Activated CD4-positive, alpha-beta T cell treated with anti-CD3 and anti-CD28 coated beads for 36 hours (primary cell): ENCODE measurements at regions of chr4 and their contacts with region 1.

Region 1: GRCh38 chr4:131084997-131085396 is 1989.0 kb downstream of the C4orf33 start:
- DNase-seq: no peak
- ATAC-seq: no peak
- H3K4me3 Mint-ChIP-seq: no peak overlapping the region
- H3K27ac Mint-ChIP-seq: no peak overlapping the region
- H3K4me1 Mint-ChIP-seq: no peaks in the 10 kb centered on the region
- H3K27me3 Mint-ChIP-seq: no peaks in the 10 kb centered on the region

Region 2: DNA sequence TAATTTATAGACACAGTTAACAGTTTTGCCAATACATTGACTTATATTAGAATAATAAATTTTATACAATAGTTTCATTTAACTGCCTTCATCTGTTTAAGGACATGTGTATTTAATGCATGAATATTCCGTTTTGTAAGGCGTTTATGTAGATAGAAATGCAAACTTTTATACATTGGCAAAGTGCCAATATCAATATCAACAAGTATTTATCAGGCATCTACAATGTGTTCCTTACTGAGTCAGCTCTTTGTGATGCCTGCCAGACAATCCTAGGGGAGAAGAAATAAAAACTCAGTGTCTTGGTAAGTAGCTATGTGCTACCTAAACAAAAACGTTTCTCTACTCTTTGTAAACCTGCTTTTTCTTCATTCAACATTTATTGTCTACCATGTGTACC is 846.9 kb before region 1 on chr4:
- CTCF ChIA-PET with region 1: no interaction called
- POLR2A ChIA-PET with region 1: no interaction called
- intact Hi-C with region 1: no loop called
- DNase-seq: no peak
- ATAC-seq: no peak
- H3K4me3 Mint-ChIP-seq: no peak overlapping the region
- H3K27ac Mint-ChIP-seq: no peak overlapping the region
- H3K4me1 Mint-ChIP-seq: peaks cover 5% of the 10 kb centered on the region
- H3K27me3 Mint-ChIP-seq: no peaks in the 10 kb centered on the region

Region 3: GRCh38 chr4:131063878-131064277 is 21.1 kb before region 1 on chr4:
- CTCF ChIA-PET with region 1: no interaction called
- POLR2A ChIA-PET with region 1: no interaction called
- intact Hi-C with region 1: no loop called
- DNase-seq: no peak
- ATAC-seq: no peak
- H3K4me3 Mint-ChIP-seq: no peak overlapping the region
- H3K27ac Mint-ChIP-seq: no peak overlapping the region
- H3K4me1 Mint-ChIP-seq: no peaks in the 10 kb centered on the region
- H3K27me3 Mint-ChIP-seq: no peaks in the 10 kb centered on the region

Region 4: DNA sequence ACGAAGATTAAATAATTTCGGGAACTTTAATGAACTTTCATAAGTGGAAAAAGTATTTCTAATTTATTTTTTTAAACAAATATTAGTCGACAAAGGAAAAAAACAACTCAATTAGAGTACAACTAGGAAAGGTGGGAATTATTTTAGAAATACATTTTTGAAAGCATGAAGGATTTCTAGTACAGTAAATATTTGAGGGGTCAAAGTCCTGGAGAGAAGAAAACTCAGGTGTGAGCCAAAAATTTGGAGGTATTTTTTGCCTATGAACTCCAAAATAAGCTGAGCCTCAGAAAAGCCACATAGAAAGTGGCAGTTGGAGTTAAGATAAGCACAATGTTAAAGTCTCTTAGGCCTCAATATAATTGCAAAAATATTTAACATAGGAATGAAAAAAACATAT is 28.3 kb after region 1 on chr4:
- CTCF ChIA-PET with region 1: no interaction called
- POLR2A ChIA-PET with region 1: no interaction called
- intact Hi-C with region 1: loop called in 1 of 2 experiments (anchors 1 kb)
- DNase-seq: no peak
- ATAC-seq: no peak
- H3K4me3 Mint-ChIP-seq: no peak overlapping the region
- H3K27ac Mint-ChIP-seq: no peak overlapping the region
- H3K4me1 Mint-ChIP-seq: no peaks in the 10 kb centered on the region
- H3K27me3 Mint-ChIP-seq: no peaks in the 10 kb centered on the region

Region 5: DNA sequence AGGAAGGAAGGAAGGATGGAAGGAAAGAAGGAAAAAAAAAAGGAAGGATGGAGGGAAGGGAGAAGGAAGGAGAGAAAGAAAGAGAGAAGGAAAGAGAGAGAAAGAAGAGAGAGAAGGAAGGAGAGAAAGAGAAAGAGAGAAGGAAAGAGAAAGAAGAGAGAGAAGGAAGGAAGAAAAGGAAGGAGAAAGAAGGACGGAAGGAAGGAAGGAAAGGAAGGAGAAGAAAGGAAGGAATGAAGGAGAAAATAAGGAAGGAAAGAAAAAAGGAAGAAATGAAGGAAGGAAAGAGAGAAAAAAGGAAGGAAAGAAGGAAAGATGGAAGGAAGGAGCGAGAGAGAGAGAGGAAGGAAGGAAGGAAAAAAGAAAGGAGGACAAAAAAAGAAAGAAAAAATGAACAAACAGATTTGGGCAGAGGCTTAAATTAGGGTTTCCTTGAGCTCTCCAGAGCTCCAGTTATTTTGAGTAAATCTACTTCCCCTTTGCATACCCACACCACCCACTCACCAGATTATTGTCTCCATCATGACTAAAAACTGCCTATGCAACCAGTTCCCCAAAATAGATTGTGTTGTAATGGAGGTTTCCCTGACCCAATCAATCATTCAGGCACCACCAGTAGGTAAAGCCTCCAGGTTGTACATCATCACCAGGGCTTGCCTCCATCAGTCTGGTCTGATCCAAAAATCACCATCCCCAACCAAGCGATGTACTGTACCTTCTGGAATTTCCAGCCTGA is 341.2 kb after region 1 on chr4:
- CTCF ChIA-PET with region 1: no interaction called
- POLR2A ChIA-PET with region 1: no interaction called
- intact Hi-C with region 1: no loop called
- DNase-seq: no peak
- ATAC-seq: no peak
- H3K4me3 Mint-ChIP-seq: no peak overlapping the region
- H3K27ac Mint-ChIP-seq: no peak overlapping the region
- H3K4me1 Mint-ChIP-seq: peaks cover 3% of the 10 kb centered on the region
- H3K27me3 Mint-ChIP-seq: no peaks in the 10 kb centered on the region